ENCODE measurements at regions of chr17 and their contacts with region 1.

Region 1: DNA sequence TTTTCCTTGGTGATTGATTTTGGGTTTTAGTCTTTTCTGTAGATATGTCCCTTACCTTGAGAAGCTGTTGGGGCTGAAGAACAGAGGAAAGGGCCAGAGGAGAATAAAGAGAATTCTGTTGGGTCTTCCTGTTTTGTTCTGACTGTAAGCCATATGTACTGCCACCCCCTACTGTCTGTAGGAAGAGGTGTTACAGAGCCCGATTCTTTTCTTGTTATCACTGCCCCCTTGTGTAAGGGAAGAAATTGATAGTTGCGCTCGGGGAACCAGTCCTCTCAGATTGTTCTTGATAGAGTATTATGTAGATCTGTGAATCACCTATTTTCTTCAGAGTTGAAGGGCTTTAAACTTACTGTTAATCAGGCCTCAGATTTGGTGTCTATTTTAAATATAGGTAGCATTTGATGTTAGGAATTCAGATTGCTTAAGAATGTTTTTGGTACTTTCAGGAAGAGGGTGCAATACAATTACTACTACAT is 2.4 kb downstream of the TANC2 start:
- DNase-seq: peak in 4 of 5 donors; percentile 60 to 93 (median 76)
- H3K4me3 ChIP-seq: peak overlapping the region in 1 of 3 donors; percentile 88
- H3K27ac ChIP-seq: no peak overlapping the region
- H3K4me1 ChIP-seq: peaks cover 0 to 8% (median 3%) of the 10 kb centered on the region in 3 donors
- H3K27me3 ChIP-seq: no peaks in the 10 kb centered on the region
- CTCF ChIP-seq: peak; percentile 80

Region 2: GRCh38 chr17:62703775-62704378 is 264.6 kb before region 1 on chr17:
- intact Hi-C with region 1: loop called (anchors 10 kb)
- DNase-seq: peak; percentile 82 to 93 (median 87)
- H3K4me3 ChIP-seq: peak overlapping the region in 1 of 3 donors; percentile 48
- H3K27ac ChIP-seq: peak overlapping the region; percentile 76 to 82
- H3K4me1 ChIP-seq: peaks cover 0 to 10% (median 0%) of the 10 kb centered on the region in 3 donors
- H3K27me3 ChIP-seq: no peaks in the 10 kb centered on the region
- CTCF ChIP-seq: peak; percentile 83

Region 3: GRCh38 chr17:62916681-62917571 is 51.6 kb before region 1 on chr17:
- intact Hi-C with region 1: no loop called
- DNase-seq: peak in 2 of 5 donors; percentile 30 to 36
- H3K4me3 ChIP-seq: no peak overlapping the region
- H3K27ac ChIP-seq: no peak overlapping the region
- H3K4me1 ChIP-seq: no peaks in the 10 kb centered on the region
- H3K27me3 ChIP-seq: no peaks in the 10 kb centered on the region
- CTCF ChIP-seq: no peak